CD8-positive, alpha-beta T cell (primary cell): ENCODE measurements at regions of chr10 and their contacts with region 1.

Region 1: DNA sequence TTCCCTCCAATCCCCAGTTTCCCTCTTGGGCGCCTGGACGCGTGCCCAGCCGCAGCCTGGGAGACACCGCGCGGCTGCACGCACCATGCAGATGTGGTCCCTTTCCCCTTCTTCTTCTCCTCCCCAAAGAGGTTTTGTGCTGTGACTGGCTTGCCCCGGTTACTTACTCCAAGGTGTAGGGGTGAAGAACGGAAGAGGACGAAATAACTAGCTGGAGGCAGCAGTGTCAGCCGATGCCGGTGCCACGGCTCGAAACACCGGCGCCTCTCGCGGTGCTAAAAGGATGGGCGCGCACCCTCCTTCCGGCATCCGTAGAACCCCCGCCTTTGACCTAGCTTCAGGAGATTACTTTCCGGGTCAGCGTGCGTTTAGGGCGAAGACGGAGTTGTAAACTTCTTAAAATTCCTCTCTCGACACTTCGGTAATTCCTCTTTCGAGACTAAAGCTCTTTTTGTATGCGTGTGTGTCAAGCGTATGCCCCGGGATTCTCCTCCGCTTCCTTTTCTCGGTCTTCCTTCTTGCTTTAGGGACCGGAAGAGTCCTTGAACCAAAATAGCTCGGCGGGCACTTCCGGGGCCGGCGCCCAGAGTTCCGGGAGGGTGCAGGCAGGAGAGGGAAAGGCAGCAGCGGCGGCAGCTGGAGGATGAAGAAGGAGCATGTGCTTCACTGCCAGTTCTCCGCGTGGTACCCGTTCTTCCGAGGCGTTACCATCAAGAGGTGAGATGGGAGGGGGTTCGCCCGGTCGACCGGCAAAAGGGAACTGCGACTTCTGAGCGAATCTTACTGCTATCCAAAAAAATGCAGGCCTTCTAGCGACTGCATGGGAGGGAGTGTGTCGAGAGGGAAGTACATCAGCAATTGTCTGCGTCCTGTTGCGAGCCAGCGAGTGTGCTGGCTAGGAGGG is at the starts of genes CDC123 and NUDT5:
- DNase-seq: peak; percentile 62 to 92 (median 84)
- ATAC-seq: peak; percentile 92
- H3K4me3 ChIP-seq: peak within 1 kb of the TSS; percentile 77 to 82
- H3K4me3 Mint-ChIP-seq: peak within 1 kb of the TSS; percentile 98
- H3K27ac ChIP-seq: peak within 1 kb of the TSS; percentile 82 to 98
- H3K27ac Mint-ChIP-seq: peak within 1 kb of the TSS; percentile 99
- H3K4me1 ChIP-seq: peaks cover 24% of the 10 kb centered on the region
- H3K4me1 Mint-ChIP-seq: peaks cover 62% of the 10 kb centered on the region
- H3K27me3 ChIP-seq: no peaks in the 10 kb centered on the region
- H3K27me3 Mint-ChIP-seq: no peaks in the 10 kb centered on the region
- CTCF ChIP-seq: no peak
- total RNA-seq, gene CDC123: 45.3 to 55.0 TPM
- total RNA-seq, gene NUDT5: 12.1 to 13.6 TPM

Region 2: GRCh38 chr10:12042797-12043651 is 152.8 kb before region 1 on chr10 and contains the start of gene UPF2:
- CTCF ChIA-PET with region 1: no interaction called
- POLR2A ChIA-PET with region 1: interaction called, 8 read pairs
- intact Hi-C with region 1: loop called (anchors 1 to 5 kb)
- DNase-seq: peak; percentile 93 to 98 (median 95)
- ATAC-seq: peak; percentile 86
- H3K4me3 ChIP-seq: peak within 1 kb of the TSS; percentile 93 to 96
- H3K4me3 Mint-ChIP-seq: peak within 1 kb of the TSS; percentile 94
- H3K27ac ChIP-seq: peak within 1 kb of the TSS; percentile 98 to 99
- H3K27ac Mint-ChIP-seq: peak within 1 kb of the TSS; percentile 100
- H3K4me1 ChIP-seq: peaks cover 14% of the 10 kb centered on the region
- H3K4me1 Mint-ChIP-seq: peaks cover 40% of the 10 kb centered on the region
- H3K27me3 ChIP-seq: peaks cover 0 to 2% of the 10 kb centered on the region in 2 experiments
- H3K27me3 Mint-ChIP-seq: no peaks in the 10 kb centered on the region
- CTCF ChIP-seq: no peak
- total RNA-seq, gene UPF2: 12.7 to 14.3 TPM

Region 3: GRCh38 chr10:12129222-12130111 is 66.4 kb before region 1 on chr10 and contains the start of gene SEC61A2:
- CTCF ChIA-PET with region 1: no interaction called
- POLR2A ChIA-PET with region 1: interaction called, 4 read pairs
- intact Hi-C with region 1: loop called (anchors 1 to 2 kb)
- DNase-seq: peak; percentile 92 to 99 (median 98)
- ATAC-seq: peak; percentile 89
- H3K4me3 ChIP-seq: peak within 1 kb of the TSS; percentile 61 to 78
- H3K4me3 Mint-ChIP-seq: peak within 1 kb of the TSS; percentile 90
- H3K27ac ChIP-seq: peak within 1 kb of the TSS; percentile 71 to 72
- H3K27ac Mint-ChIP-seq: peak within 1 kb of the TSS; percentile 90
- H3K4me1 ChIP-seq: peaks cover 9% of the 10 kb centered on the region
- H3K4me1 Mint-ChIP-seq: peaks cover 17% of the 10 kb centered on the region
- H3K27me3 ChIP-seq: no peaks in the 10 kb centered on the region
- H3K27me3 Mint-ChIP-seq: no peaks in the 10 kb centered on the region
- CTCF ChIP-seq: no peak
- total RNA-seq, gene SEC61A2: 10.2 to 14.5 TPM

Region 4: GRCh38 chr10:12214763-12215218 is 18.9 kb after region 1 on chr10:
- CTCF ChIA-PET with region 1: interaction called, 33 read pairs
- POLR2A ChIA-PET with region 1: interaction called, 11 read pairs
- intact Hi-C with region 1: loop called in 1 of 2 experiments (anchors 2 kb)
- DNase-seq: peak in 6 of 9 experiments; percentile 10 to 75 (median 52)
- ATAC-seq: peak; percentile 44
- H3K4me3 ChIP-seq: peak overlapping the region in 1 of 2 experiments; percentile 24
- H3K4me3 Mint-ChIP-seq: peak overlapping the region; percentile 69
- H3K27ac ChIP-seq: peak overlapping the region in 1 of 2 experiments; percentile 51
- H3K27ac Mint-ChIP-seq: peak overlapping the region; percentile 87
- H3K4me1 ChIP-seq: peaks cover 5% of the 10 kb centered on the region
- H3K4me1 Mint-ChIP-seq: peaks cover 17% of the 10 kb centered on the region
- H3K27me3 ChIP-seq: no peaks in the 10 kb centered on the region
- H3K27me3 Mint-ChIP-seq: no peaks in the 10 kb centered on the region
- CTCF ChIP-seq: peak; percentile 73

Region 5: GRCh38 chr10:13299437-13300287 is 1103.8 kb after region 1 on chr10 and contains the start of gene PHYH:
- CTCF ChIA-PET with region 1: no interaction called
- POLR2A ChIA-PET with region 1: interaction called, 4 read pairs
- intact Hi-C with region 1: loop called (anchors 5 kb)
- DNase-seq: peak; percentile 65 to 93 (median 80)
- ATAC-seq: peak; percentile 52
- H3K4me3 ChIP-seq: peak within 1 kb of the TSS; percentile 68 to 70
- H3K4me3 Mint-ChIP-seq: peak within 1 kb of the TSS; percentile 84
- H3K27ac ChIP-seq: peak within 1 kb of the TSS; percentile 81 to 91
- H3K27ac Mint-ChIP-seq: peak within 1 kb of the TSS; percentile 94
- H3K4me1 ChIP-seq: peaks cover 28% of the 10 kb centered on the region
- H3K4me1 Mint-ChIP-seq: peaks cover 26% of the 10 kb centered on the region
- H3K27me3 ChIP-seq: no peaks in the 10 kb centered on the region
- H3K27me3 Mint-ChIP-seq: no peaks in the 10 kb centered on the region
- CTCF ChIP-seq: no peak
- total RNA-seq, gene PHYH: 12.6 TPM